ENCODE measurements at regions of chr18 and their contacts with region 1.

Region 1: DNA sequence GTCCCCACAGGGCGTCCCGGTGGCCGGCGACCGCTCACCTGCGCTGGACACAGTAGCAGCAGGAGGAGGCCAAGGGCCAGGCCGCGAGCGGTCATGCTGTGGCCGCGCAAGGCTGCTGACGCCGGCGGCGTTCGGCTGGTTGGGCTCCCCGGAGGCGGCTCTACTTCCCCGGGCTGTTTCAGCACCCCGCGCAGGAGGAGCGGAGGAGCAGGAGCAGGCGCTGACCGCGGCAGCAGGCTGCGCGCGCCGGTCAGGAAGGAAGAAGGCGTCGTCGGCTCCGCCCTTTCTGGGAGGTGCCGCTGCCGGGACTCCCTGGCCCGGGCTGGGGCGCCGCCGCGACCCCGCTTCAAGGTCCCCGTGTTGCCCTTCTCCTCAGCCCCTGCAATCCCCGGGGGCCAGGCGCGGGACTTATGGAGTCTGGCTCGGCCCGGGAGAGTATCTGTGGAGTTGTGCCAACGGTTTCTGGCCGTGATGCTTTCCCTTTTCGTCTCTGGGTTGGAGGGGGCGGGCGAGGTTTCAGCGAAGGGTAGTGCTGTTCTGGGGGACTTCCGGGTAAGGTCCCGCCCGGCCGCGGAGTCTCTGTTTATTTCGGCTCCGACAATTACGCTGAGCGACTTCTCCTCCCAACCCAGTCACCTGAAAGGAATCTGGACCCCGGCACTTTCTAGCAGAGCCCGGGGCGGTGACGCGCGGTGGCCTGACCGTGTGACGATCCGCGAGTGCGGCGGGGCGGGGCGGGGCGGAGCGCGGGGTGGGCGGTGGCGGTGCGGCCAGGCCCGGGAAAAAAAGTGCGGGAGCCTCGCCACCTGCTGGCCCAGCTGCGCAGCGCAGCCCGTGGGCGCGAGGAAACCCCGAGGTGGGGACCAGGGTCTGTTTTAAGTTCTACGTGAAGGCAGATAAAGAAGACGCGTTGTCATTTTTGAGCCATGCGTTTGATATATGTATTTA is at the start of gene NPC1:
- DNase-seq: peak; percentile 95
- CTCF ChIP-seq: peak; percentile 97

Region 2: DNA sequence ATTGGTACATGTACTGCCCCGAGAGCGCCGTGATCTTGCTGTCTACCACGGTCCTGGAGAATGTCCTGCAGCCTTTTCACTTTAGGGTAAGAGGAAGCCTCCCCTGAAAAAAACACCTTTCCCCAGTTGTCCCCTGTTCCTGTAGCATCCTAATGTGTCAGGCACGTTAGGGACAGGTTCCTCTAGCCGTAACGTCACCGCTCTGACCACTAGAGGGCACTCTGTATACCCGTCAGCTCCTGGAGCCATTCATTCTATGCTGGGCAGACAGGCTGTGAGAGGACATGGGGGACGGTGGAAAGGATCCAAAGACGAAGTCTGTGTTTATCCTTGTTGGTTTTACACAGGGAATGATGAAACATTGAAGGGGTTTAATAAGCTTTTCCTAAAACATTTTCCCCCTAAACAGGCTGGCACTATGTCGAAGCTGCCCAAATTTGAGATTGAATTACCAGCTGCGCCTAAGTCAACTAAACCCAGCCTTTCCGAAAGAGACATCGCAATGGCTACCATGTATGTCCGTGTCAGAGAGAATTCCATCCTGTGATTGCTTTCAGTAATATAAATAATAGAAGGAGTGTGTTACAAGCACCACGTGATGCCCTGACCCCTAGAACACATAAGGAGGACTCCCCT is 70.5 kb before region 1 on chr18:
- in situ Hi-C with region 1: loop called (anchors 10 kb)
- DNase-seq: peak; percentile 72
- CTCF ChIP-seq: peak; percentile 93

Region 3: DNA sequence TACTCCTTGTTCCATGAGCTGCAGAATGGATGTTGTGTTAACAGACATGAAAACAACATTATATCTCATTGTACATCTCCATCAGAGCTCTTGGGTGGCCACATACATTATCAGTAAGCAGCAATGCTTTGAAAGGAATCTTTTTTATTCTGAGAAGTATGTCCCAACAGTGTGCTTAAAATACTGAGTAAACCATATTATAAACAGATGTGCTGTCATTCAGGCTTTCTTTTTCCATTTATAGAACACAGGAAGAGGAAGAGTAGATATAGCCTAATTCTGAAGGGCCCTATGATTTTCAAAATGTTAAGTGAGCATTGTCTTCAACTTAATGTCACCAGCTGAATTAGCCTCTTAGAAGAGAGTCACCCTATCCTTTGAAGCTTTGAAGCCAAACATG is 508.0 kb after region 1 on chr18:
- in situ Hi-C with region 1: no loop called
- DNase-seq: no peak
- CTCF ChIP-seq: no peak

Measured in GM13976 (cell line).